ENCODE measurements at regions of chr1 and their contacts with region 1.

Region 1: GRCh38 chr1:240244968-240245628 is 153.4 kb downstream of the FMN2 start:
- DNase-seq: peak; percentile 89
- H3K4me3 ChIP-seq: peak overlapping the region; percentile 27; the same call in 1 of the 2 replicates
- CTCF ChIP-seq: no peak

Region 2: GRCh38 chr1:239778221-239778813 is 466.8 kb before region 1 on chr1:
- CTCF ChIA-PET with region 1: no interaction called
- POLR2A ChIA-PET with region 1: no interaction called
- DNase-seq: no peak
- H3K4me3 ChIP-seq: no peak overlapping the region
- CTCF ChIP-seq: no peak

Region 3: DNA sequence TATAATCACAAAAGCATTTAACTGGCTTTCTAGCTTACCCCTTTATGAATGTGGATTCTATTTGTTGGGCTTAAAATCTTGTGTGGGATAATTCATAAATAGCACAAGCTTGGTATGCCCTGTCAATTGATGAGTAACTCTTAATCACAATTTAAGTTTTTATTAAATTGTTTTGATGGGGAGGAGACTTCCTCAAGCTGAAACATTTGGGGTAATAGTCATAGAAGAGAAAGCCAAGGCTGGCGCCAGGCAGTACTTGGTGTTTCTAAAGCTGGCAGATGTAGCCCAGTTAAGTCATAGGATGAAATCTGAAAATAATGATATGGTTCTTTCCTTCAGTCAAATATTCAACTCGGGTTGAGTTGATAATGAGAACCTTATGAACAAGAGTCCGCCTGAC is 13.8 kb after region 1 on chr1:
- CTCF ChIA-PET with region 1: interaction called, 4 read pairs
- POLR2A ChIA-PET with region 1: interaction called, 18 read pairs
- DNase-seq: peak; percentile 77
- H3K4me3 ChIP-seq: no peak overlapping the region
- CTCF ChIP-seq: no peak